ENCODE measurements at regions of chr19 and their contacts with region 1.

Region 1: GRCh38 chr19:55653758-55654539 is 886 bp upstream of the U2AF2 start:
- DNase-seq: peak; percentile 95
- ATAC-seq: peak; percentile 77
- H3K4me3 Mint-ChIP-seq: peak overlapping the region; percentile 95
- H3K27ac Mint-ChIP-seq: peak overlapping the region; percentile 98
- H3K4me1 Mint-ChIP-seq: peaks cover 56% of the 10 kb centered on the region
- H3K27me3 Mint-ChIP-seq: no peaks in the 10 kb centered on the region
- CTCF ChIP-seq: peak; percentile 97

Region 2: DNA sequence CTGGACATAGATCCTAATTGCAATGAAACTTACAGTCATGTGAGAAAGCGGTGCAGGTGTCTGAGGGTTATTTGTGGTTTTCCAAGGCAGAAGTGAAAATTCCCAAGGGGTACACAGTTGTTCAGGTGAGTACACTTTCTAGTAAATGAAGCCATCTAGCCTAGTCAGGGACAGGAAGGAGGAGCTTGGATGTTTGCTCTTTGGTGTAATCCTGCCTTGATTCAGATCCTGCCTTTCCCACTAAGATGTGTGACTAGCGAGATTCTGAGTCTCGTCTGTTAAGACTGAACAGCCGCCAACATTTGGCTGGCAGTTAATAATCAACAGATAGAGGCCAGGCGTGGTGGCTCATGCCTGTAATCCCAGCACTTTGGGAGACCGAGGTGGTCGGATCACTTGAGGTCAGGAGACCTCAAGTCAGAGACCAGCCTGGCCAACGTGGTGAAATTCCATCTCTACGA is 1450.8 kb before region 1 on chr19:
- CTCF ChIA-PET with region 1: no interaction called
- POLR2A ChIA-PET with region 1: no interaction called
- intact Hi-C with region 1: loop called (anchors 2 kb)
- DNase-seq: no peak
- ATAC-seq: no peak
- H3K4me3 Mint-ChIP-seq: peak overlapping the region; percentile 100
- H3K27ac Mint-ChIP-seq: peak overlapping the region; percentile 24
- H3K4me1 Mint-ChIP-seq: peaks cover 82% of the 10 kb centered on the region
- H3K27me3 Mint-ChIP-seq: no peaks in the 10 kb centered on the region
- CTCF ChIP-seq: no peak

Region 3: GRCh38 chr19:55146078-55146704 is 507.8 kb before region 1 on chr19:
- CTCF ChIA-PET with region 1: no interaction called
- POLR2A ChIA-PET with region 1: no interaction called
- intact Hi-C with region 1: no loop called
- DNase-seq: no peak
- ATAC-seq: no peak
- H3K4me3 Mint-ChIP-seq: no peak overlapping the region
- H3K27ac Mint-ChIP-seq: no peak overlapping the region
- H3K4me1 Mint-ChIP-seq: peaks cover 4% of the 10 kb centered on the region
- H3K27me3 Mint-ChIP-seq: peaks cover 49% of the 10 kb centered on the region
- CTCF ChIP-seq: no peak

Region 4: DNA sequence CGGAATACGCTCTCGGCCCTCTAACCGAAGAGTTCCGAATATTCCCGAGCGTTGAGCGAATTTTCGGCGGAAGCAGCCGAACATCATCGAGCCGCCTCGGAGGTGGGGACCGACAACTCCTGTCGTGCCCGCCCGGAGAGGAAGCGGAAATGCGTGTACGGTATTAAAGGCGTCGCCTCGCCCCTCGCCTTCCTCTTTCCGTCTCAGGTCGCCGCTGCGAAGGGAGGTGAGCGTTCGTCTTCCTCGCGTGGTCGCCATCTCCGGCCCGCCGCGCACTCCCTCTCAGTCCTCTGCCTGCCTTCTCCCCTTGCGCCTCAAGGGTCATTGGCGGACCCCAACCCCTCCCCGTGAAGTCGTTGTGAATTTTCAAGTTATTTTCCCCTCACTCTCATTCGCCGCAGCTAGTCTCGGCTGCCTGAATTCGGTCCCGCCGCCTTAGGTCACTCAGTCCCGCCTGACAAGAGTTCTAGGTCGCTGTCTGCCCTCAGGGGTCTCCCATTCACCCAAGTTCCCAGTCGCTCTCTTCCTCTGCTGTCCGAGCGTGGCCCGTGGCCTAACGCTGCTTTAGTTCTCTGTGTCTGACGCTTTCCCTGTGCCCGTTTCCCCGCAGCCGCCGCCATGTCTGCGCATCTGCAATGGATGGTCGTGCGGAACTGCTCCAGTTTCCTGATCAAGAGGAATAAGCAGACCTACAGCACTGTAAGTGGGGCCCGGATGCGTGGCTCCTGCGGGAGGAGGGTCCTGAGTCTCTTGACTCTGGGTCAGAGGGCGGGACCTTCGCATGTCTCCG is 268.0 kb before region 1 on chr19 and contains the start of gene RPL28:
- CTCF ChIA-PET with region 1: no interaction called
- POLR2A ChIA-PET with region 1: interaction called, 10 read pairs
- intact Hi-C with region 1: loop called (anchors 1 kb)
- DNase-seq: peak; percentile 95
- ATAC-seq: peak; percentile 79
- H3K4me3 Mint-ChIP-seq: peak within 1 kb of the TSS; percentile 100
- H3K27ac Mint-ChIP-seq: peak within 1 kb of the TSS; percentile 99
- H3K4me1 Mint-ChIP-seq: peaks cover 67% of the 10 kb centered on the region
- H3K27me3 Mint-ChIP-seq: no peaks in the 10 kb centered on the region
- CTCF ChIP-seq: no peak
- total RNA-seq, gene RPL28: 3,790 and 4,042 TPM in 2 replicates

Region 5: GRCh38 chr19:55580628-55581144 is 73.3 kb before region 1 on chr19 and contains the start of gene ZNF579:
- CTCF ChIA-PET with region 1: interaction called, 3 read pairs
- POLR2A ChIA-PET with region 1: interaction called, 4 read pairs
- intact Hi-C with region 1: loop called (anchors 2 kb)
- DNase-seq: peak; percentile 68
- ATAC-seq: peak; percentile 83
- H3K4me3 Mint-ChIP-seq: peak within 1 kb of the TSS; percentile 84
- H3K27ac Mint-ChIP-seq: peak within 1 kb of the TSS; percentile 75
- H3K4me1 Mint-ChIP-seq: peaks cover 29% of the 10 kb centered on the region
- H3K27me3 Mint-ChIP-seq: no peaks in the 10 kb centered on the region
- CTCF ChIP-seq: no peak
- total RNA-seq, gene ZNF579: 10.3 and 10.9 TPM in 2 replicates

Region 6: DNA sequence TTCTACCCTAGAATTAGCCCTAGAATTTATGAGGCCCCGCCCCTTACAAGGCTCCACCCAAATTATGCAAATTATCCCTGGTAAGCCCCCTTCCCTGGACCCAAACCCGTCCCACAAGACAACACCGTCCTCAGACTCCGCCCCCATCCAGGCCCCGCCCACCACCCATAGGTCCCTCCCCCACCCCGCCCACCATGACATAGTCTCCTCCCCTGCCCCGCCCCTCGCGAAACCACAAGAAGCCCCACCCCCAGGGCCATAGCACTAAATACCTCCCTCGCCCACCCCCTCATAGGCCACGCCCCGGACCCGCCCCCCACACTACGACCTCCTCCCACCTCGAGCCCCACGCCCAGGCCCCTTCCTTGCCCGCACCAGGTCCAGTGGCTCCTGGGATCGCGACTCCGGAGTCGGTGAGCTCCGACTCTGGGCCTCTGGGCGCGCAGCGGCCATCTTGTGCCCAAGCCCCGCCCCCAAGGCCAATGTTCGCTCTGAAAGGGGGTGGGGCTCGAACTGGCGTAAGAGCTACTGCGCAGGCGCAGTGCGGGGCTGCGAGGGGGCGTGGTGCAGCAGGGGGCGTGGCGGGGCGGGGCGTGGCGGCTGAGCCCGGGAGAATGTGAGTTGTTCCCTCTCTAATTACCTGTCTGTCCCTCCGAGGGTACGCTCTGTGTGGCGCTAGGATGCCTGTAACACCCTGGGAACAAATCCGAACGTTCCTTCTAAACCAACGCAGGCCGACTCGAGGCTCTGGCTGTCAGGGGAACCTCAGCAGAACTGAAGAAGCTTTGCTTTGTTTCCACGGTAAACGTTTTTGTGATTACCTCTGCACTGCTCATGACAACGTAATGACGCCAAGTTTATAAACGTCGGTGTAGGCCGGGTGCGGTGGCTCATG is 29.6 kb before region 1 on chr19 and contains the start of gene ZNF784:
- CTCF ChIA-PET with region 1: interaction called, 4 read pairs
- POLR2A ChIA-PET with region 1: interaction called, 23 read pairs
- intact Hi-C with region 1: no loop called
- DNase-seq: peak; percentile 93
- ATAC-seq: peak; percentile 85
- H3K4me3 Mint-ChIP-seq: peak within 1 kb of the TSS; percentile 94
- H3K27ac Mint-ChIP-seq: peak within 1 kb of the TSS; percentile 97
- H3K4me1 Mint-ChIP-seq: peaks cover 17% of the 10 kb centered on the region
- H3K27me3 Mint-ChIP-seq: no peaks in the 10 kb centered on the region
- CTCF ChIP-seq: no peak
- total RNA-seq, gene ZNF784: 8.7 and 8.9 TPM in 2 replicates

Region 7: GRCh38 chr19:55663846-55664536 is 10.0 kb after region 1 on chr19:
- CTCF ChIA-PET with region 1: no interaction called
- POLR2A ChIA-PET with region 1: interaction called, 10 read pairs
- intact Hi-C with region 1: no loop called
- DNase-seq: no peak
- ATAC-seq: no peak
- H3K4me3 Mint-ChIP-seq: no peak overlapping the region
- H3K27ac Mint-ChIP-seq: no peak overlapping the region
- H3K4me1 Mint-ChIP-seq: peaks cover 21% of the 10 kb centered on the region
- H3K27me3 Mint-ChIP-seq: no peaks in the 10 kb centered on the region
- CTCF ChIP-seq: no peak

Region 8: GRCh38 chr19:56121180-56122167 is 467.5 kb after region 1 on chr19 and contains the start of gene ZNF787:
- CTCF ChIA-PET with region 1: no interaction called
- POLR2A ChIA-PET with region 1: interaction called, 5 read pairs
- intact Hi-C with region 1: loop called (anchors 2 kb)
- DNase-seq: peak; percentile 99
- ATAC-seq: peak; percentile 87
- H3K4me3 Mint-ChIP-seq: peak within 1 kb of the TSS; percentile 91
- H3K27ac Mint-ChIP-seq: peak within 1 kb of the TSS; percentile 95
- H3K4me1 Mint-ChIP-seq: peaks cover 45% of the 10 kb centered on the region
- H3K27me3 Mint-ChIP-seq: no peaks in the 10 kb centered on the region
- CTCF ChIP-seq: no peak
- total RNA-seq, gene ZNF787: 40.8 and 42.3 TPM in 2 replicates

Measured in activated B cell treated with CpG ODN at 0.5 μM for 24 hours (primary cell).